ENCODE measurements at regions of chr17 and their contacts with region 1.

Region 1: GRCh38 chr17:82098072-82098821 is at the start of gene FASN:
- DNase-seq: peak; percentile 75 to 90
- ATAC-seq: peak; percentile 68 to 71
- H3K4me3 ChIP-seq: peak within 1 kb of the TSS; percentile 61 to 93 (median 72)
- H3K27ac ChIP-seq: peak within 1 kb of the TSS; percentile 81 to 96 (median 90)
- H3K4me1 ChIP-seq: peaks cover 30 to 32% of the 10 kb centered on the region in 2 donors
- H3K27me3 ChIP-seq: no peaks in the 10 kb centered on the region
- CTCF ChIP-seq: peak in 4 of 5 experiments; percentile 28 to 43 (median 36)
- POLR2A ChIP-seq: peak; percentile 82 to 97
- total RNA-seq, gene FASN: 16.3 to 34.5 (median 26.3) TPM

Region 2: DNA sequence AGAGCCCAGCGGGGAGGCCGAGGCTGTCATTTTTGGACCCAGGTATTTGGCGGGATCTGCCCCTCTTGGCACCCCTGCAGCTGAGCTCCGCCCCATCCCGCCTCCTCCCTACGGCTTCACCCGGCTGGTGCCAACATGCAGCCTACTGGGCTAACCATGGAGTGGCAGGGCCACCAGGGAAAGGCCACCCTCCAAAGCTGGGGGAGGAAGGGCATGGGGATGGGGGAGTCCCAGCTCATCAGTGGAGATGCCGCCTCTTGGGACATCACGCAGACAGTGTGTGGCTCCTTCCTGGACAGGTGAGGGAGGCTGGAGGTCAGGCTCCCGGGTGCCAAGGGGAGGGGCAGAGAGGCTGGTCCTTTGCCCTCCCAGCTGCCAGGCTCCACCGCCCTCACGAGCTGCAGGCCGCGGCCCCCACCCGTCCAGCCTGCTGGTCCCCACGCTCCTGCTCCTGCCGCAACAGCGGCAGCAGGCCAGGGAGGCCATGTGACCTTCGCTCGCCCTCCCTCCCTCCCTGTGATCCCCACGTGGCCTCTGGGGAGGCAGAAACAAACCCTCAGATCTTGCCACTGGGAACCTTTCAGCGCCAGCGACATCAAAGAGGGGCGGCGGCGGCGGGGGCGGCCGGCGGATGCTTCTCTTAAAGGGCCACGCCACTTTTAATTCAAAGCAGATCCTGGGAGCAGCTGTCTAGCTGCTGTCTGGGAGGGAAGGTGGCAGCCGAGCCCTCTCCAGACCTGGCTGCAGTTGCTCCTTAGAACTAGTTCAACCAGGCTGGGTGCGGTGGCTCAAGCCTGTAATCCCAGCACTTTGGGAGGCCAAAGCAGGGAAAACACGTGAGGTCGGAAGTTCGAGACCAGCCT is 130.5 kb before region 1 on chr17:
- in situ Hi-C with region 1: no loop called
- intact Hi-C with region 1: no loop called
- DNase-seq: peak; percentile 55 to 78
- ATAC-seq: peak; percentile 79 to 82
- H3K4me3 ChIP-seq: peak overlapping the region; percentile 11 to 51 (median 40)
- H3K27ac ChIP-seq: peak overlapping the region in 3 of 4 donors; percentile 59 to 82 (median 69)
- H3K4me1 ChIP-seq: peaks cover 7 to 19% of the 10 kb centered on the region in 2 donors
- H3K27me3 ChIP-seq: peaks cover 0 to 3% (median 0%) of the 10 kb centered on the region in 3 donors
- CTCF ChIP-seq: no peak
- POLR2A ChIP-seq: peak; percentile 14 to 22

Region 3: GRCh38 chr17:82051776-82052637 is 46.2 kb before region 1 on chr17 and contains the starts of genes GPS1 and RFNG:
- in situ Hi-C with region 1: no loop called
- intact Hi-C with region 1: loop called (anchors 5 kb)
- DNase-seq: peak; percentile 46 to 68
- ATAC-seq: peak; percentile 76 to 85
- H3K4me3 ChIP-seq: peak within 1 kb of the TSS; percentile 66 to 87 (median 74)
- H3K27ac ChIP-seq: peak within 1 kb of the TSS; percentile 43 to 72 (median 64)
- H3K4me1 ChIP-seq: peaks cover 22 to 29% of the 10 kb centered on the region in 2 donors
- H3K27me3 ChIP-seq: no peaks in the 10 kb centered on the region
- CTCF ChIP-seq: no peak
- POLR2A ChIP-seq: peak; percentile 29 to 51
- total RNA-seq, gene GPS1: 119 to 174 (median 137) TPM
- total RNA-seq, gene RFNG: 29.6 to 64.9 (median 49.1) TPM

Region 4: DNA sequence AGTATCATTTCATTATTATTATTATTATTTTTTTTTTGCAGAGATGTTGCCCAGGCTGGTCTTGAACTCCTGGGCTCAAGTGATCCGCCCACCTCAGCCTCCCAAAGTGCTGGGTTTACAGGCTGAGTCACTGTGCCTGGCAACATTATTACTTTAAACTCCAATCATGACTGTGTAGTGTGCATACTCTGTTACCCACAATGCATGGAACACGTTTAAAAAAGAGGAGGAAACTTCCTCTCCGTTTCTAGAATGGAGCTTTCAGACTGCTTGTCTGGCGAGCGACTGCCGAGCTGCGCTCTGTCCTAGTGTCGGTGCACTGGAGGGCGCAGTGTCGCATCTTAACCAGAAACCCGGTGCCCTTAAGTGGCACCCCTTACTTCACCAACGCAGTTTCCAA is 21.9 kb after region 1 on chr17:
- in situ Hi-C with region 1: no loop called
- intact Hi-C with region 1: no loop called
- DNase-seq: no peak
- ATAC-seq: no peak
- H3K4me3 ChIP-seq: no peak overlapping the region
- H3K27ac ChIP-seq: no peak overlapping the region
- H3K4me1 ChIP-seq: no peaks in the 10 kb centered on the region
- H3K27me3 ChIP-seq: no peaks in the 10 kb centered on the region
- CTCF ChIP-seq: no peak
- POLR2A ChIP-seq: no peak

Region 5: GRCh38 chr17:82153745-82154375 is 55.6 kb after region 1 on chr17:
- in situ Hi-C with region 1: no loop called
- intact Hi-C with region 1: loop called (anchors 5 kb)
- DNase-seq: peak; percentile 66 to 80
- ATAC-seq: peak; percentile 78
- H3K4me3 ChIP-seq: no peak overlapping the region
- H3K27ac ChIP-seq: peak overlapping the region in 2 of 4 donors; percentile 80 to 81
- H3K4me1 ChIP-seq: peaks cover 17 to 20% of the 10 kb centered on the region in 2 donors
- H3K27me3 ChIP-seq: no peaks in the 10 kb centered on the region
- CTCF ChIP-seq: peak; percentile 89 to 96 (median 93)
- POLR2A ChIP-seq: no peak

Measured in gastrocnemius medialis (tissue), 4 donors.